ENCODE measurements at regions of chr19 and their contacts with region 1.

Region 1: GRCh38 chr19:14127929-14128509 is 8.4 kb downstream of the ASF1B start:
- DNase-seq: no peak
- ATAC-seq: no peak
- H3K4me3 ChIP-seq: no peak overlapping the region
- H3K27ac ChIP-seq: no peak overlapping the region
- H3K4me1 ChIP-seq: no peaks in the 10 kb centered on the region
- H3K27me3 ChIP-seq: no peaks in the 10 kb centered on the region
- CTCF ChIP-seq: no peak

Region 2: GRCh38 chr19:14002571-14003231 is 125.3 kb before region 1 on chr19:
- CTCF ChIA-PET with region 1: no interaction called
- POLR2A ChIA-PET with region 1: interaction called, 25 read pairs
- in situ Hi-C with region 1: no loop called
- intact Hi-C with region 1: no loop called
- DNase-seq: no peak
- ATAC-seq: no peak
- H3K4me3 ChIP-seq: no peak overlapping the region
- H3K27ac ChIP-seq: no peak overlapping the region
- H3K4me1 ChIP-seq: peaks cover 12% of the 10 kb centered on the region
- H3K27me3 ChIP-seq: no peaks in the 10 kb centered on the region
- CTCF ChIP-seq: no peak

Measured in Panc1 (cell line).